ENCODE measurements at regions of chr12 and their contacts with region 1.

Region 1: DNA sequence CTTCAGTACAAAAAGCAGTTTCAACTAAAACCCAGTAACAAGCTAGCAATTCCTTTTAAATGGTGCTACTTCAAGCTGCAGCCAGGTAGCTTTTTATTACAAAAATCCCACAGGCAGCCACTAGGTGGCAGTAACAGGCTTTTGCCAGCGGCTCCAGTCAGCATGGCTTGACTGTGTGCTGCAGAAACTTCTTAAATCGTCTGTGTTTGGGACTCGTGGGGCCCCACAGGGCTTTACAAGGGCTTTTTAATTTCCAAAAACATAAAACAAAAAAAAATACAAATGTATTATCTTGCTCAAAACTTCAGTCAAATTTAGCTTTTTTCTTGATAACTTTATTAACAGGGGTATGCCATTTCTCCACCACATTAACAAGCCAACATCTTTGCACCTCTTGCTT is 3.6 kb upstream of the CLEC4E start:
- DNase-seq: peak; percentile 69 to 79 (median 72)
- H3K4me3 ChIP-seq: no peak overlapping the region
- H3K4me3 Mint-ChIP-seq: peak overlapping the region in 7 of 8 donors; percentile 37 to 59 (median 51)
- H3K27ac ChIP-seq: no peak overlapping the region
- H3K27ac Mint-ChIP-seq: no peak overlapping the region
- H3K4me1 ChIP-seq: peaks cover 6% of the 10 kb centered on the region
- H3K4me1 Mint-ChIP-seq: peaks cover 0 to 10% (median 5%) of the 10 kb centered on the region in 4 donors
- H3K27me3 ChIP-seq: no peaks in the 10 kb centered on the region
- H3K27me3 Mint-ChIP-seq: peaks cover 15 to 20% of the 10 kb centered on the region in 2 donors

Region 2: GRCh38 chr12:8420506-8420905 is 123.8 kb before region 1 on chr12:
- CTCF ChIA-PET with region 1: no interaction called
- POLR2A ChIA-PET with region 1: no interaction called
- intact Hi-C with region 1: no loop called
- DNase-seq: no peak
- H3K4me3 ChIP-seq: no peak overlapping the region
- H3K4me3 Mint-ChIP-seq: no peak overlapping the region
- H3K27ac ChIP-seq: no peak overlapping the region
- H3K27ac Mint-ChIP-seq: no peak overlapping the region
- H3K4me1 ChIP-seq: no peaks in the 10 kb centered on the region
- H3K4me1 Mint-ChIP-seq: no peaks in the 10 kb centered on the region
- H3K27me3 ChIP-seq: no peaks in the 10 kb centered on the region
- H3K27me3 Mint-ChIP-seq: no peaks in the 10 kb centered on the region

Region 3: DNA sequence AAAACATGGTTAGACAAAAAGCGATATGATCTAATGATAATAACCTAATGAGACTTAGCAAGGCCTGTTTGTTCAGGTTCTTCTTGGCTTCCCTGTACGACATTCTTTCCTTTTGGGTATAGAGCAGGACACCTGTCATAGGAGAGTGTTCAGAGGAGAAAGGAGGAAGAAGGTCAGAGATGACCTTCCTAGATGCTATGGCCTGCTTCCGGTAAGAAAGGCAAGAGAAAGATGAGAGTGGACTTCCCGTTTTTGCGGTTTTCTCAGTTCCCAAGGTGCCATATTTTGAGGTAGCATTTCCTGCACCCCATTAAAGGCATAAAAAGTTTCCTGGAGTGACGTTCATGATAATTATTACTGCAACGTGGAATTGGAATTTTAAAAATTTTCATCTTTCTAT is 12.2 kb before region 1 on chr12:
- CTCF ChIA-PET with region 1: interaction called, 25 read pairs
- POLR2A ChIA-PET with region 1: no interaction called
- intact Hi-C with region 1: no loop called
- DNase-seq: no peak
- H3K4me3 ChIP-seq: no peak overlapping the region
- H3K4me3 Mint-ChIP-seq: no peak overlapping the region
- H3K27ac ChIP-seq: no peak overlapping the region
- H3K27ac Mint-ChIP-seq: no peak overlapping the region
- H3K4me1 ChIP-seq: no peaks in the 10 kb centered on the region
- H3K4me1 Mint-ChIP-seq: no peaks in the 10 kb centered on the region
- H3K27me3 ChIP-seq: no peaks in the 10 kb centered on the region
- H3K27me3 Mint-ChIP-seq: peaks cover 11 to 17% of the 10 kb centered on the region in 2 donors

Region 4: GRCh38 chr12:8572507-8572906 is 28.2 kb after region 1 on chr12:
- CTCF ChIA-PET with region 1: interaction called, 24 read pairs
- POLR2A ChIA-PET with region 1: no interaction called
- intact Hi-C with region 1: no loop called
- DNase-seq: peak in 4 of 5 donors; percentile 27 to 53 (median 46)
- H3K4me3 ChIP-seq: no peak overlapping the region
- H3K4me3 Mint-ChIP-seq: peak overlapping the region in 7 of 8 donors; percentile 58 to 79 (median 72)
- H3K27ac ChIP-seq: no peak overlapping the region
- H3K27ac Mint-ChIP-seq: peak overlapping the region; percentile 35 to 95 (median 94)
- H3K4me1 ChIP-seq: peaks cover 21% of the 10 kb centered on the region
- H3K4me1 Mint-ChIP-seq: peaks cover 17 to 25% (median 18%) of the 10 kb centered on the region in 4 donors
- H3K27me3 ChIP-seq: no peaks in the 10 kb centered on the region
- H3K27me3 Mint-ChIP-seq: peaks cover 0 to 4% of the 10 kb centered on the region in 2 donors

Region 5: DNA sequence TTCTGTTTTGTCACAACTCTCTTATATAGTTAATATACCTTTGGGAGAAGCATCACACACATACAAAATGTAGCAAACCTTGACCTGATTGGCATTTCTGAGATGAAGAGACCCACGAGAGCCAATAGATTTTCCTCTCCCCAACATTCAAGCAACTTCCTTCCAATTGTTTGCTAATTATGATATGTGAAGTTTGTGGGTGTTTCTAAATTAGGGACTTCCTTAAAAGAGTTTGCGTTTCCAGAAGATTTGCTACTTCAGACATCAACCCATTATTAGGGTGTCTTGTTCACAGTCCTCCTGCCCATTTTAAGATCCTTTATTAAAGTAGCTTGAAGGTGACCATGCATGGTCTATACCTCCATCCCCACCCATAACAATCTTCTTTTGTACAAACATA is 59.0 kb after region 1 on chr12:
- CTCF ChIA-PET with region 1: interaction called, 130 read pairs
- POLR2A ChIA-PET with region 1: no interaction called
- intact Hi-C with region 1: no loop called
- DNase-seq: no peak
- H3K4me3 ChIP-seq: no peak overlapping the region
- H3K4me3 Mint-ChIP-seq: no peak overlapping the region
- H3K27ac ChIP-seq: no peak overlapping the region
- H3K27ac Mint-ChIP-seq: no peak overlapping the region
- H3K4me1 ChIP-seq: no peaks in the 10 kb centered on the region
- H3K4me1 Mint-ChIP-seq: peaks cover 0 to 2% (median 0%) of the 10 kb centered on the region in 4 donors
- H3K27me3 ChIP-seq: no peaks in the 10 kb centered on the region
- H3K27me3 Mint-ChIP-seq: peaks cover 4 to 7% of the 10 kb centered on the region in 2 donors

Region 6: DNA sequence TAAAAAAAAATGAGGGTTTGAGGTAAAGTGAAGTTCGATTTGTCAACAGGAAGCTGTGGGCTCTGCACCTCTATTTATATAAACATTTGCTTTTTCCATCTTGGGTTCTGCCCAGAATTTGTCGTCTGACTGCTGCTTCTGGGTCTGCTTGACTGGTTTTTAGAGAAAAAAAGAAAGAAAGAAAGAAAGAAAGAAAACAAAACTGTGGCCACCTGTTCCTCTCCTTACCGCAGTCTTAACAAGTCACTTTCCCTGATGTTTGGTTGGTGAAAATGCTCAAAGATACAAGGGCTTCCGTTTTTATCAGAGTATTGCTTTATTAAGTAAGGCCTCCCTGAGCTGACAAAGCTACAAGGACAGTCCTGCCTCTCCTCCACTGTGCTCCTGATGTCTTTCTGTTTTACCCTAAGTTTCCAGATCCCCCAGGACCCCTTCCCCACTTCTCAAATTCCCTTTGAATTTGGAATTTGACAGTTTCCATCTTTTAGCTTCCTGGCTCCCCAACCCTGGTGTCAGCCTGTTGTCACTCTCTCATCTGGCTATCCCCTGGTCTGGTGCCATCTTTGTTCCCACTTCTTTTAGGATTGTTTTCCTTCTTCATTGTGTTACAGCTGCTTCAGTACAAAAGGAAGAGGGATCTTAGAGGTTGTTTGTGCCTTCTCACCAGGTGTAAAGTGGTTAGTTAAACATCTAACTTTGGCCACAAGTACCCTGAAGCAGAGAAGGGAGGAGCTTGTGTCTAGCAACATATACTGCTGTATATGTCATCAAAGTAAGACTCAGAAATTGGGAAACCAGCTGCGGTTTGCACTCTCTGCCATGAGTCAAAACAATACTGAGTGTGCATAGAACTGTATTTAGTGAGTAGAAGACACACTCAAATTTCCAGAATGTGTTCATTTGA is 100.3 kb after region 1 on chr12:
- CTCF ChIA-PET with region 1: interaction called, 12 read pairs
- POLR2A ChIA-PET with region 1: interaction called, 6 read pairs
- intact Hi-C with region 1: no loop called
- DNase-seq: peak; percentile 52 to 65 (median 59)
- H3K4me3 ChIP-seq: peak overlapping the region in 1 of 2 donors; percentile 36
- H3K4me3 Mint-ChIP-seq: peak overlapping the region; percentile 68 to 92 (median 82)
- H3K27ac ChIP-seq: peak overlapping the region; percentile 38
- H3K27ac Mint-ChIP-seq: peak overlapping the region; percentile 83 to 98 (median 94)
- H3K4me1 ChIP-seq: peaks cover 42% of the 10 kb centered on the region
- H3K4me1 Mint-ChIP-seq: peaks cover 37 to 60% (median 46%) of the 10 kb centered on the region in 4 donors
- H3K27me3 ChIP-seq: no peaks in the 10 kb centered on the region
- H3K27me3 Mint-ChIP-seq: no peaks in the 10 kb centered on the region

Region 7: GRCh38 chr12:8681041-8681902 is 137.0 kb after region 1 on chr12:
- CTCF ChIA-PET with region 1: interaction called, 59 read pairs
- POLR2A ChIA-PET with region 1: no interaction called
- intact Hi-C with region 1: loop called (anchors 1 kb)
- DNase-seq: no peak
- H3K4me3 ChIP-seq: no peak overlapping the region
- H3K4me3 Mint-ChIP-seq: no peak overlapping the region
- H3K27ac ChIP-seq: no peak overlapping the region
- H3K27ac Mint-ChIP-seq: peak overlapping the region in 1 of 7 donors; percentile 30
- H3K4me1 ChIP-seq: no peaks in the 10 kb centered on the region
- H3K4me1 Mint-ChIP-seq: peaks cover 0 to 9% (median 5%) of the 10 kb centered on the region in 4 donors
- H3K27me3 ChIP-seq: no peaks in the 10 kb centered on the region
- H3K27me3 Mint-ChIP-seq: peaks cover 5 to 10% of the 10 kb centered on the region in 2 donors

Region 8: GRCh38 chr12:8860165-8860961 is 316.1 kb after region 1 on chr12:
- CTCF ChIA-PET with region 1: interaction called, 24 read pairs
- POLR2A ChIA-PET with region 1: interaction called, 4 read pairs
- intact Hi-C with region 1: loop called (anchors 1 kb)
- DNase-seq: peak in 4 of 5 donors; percentile 18 to 28 (median 25)
- H3K4me3 ChIP-seq: no peak overlapping the region
- H3K4me3 Mint-ChIP-seq: no peak overlapping the region
- H3K27ac ChIP-seq: no peak overlapping the region
- H3K27ac Mint-ChIP-seq: no peak overlapping the region
- H3K4me1 ChIP-seq: no peaks in the 10 kb centered on the region
- H3K4me1 Mint-ChIP-seq: no peaks in the 10 kb centered on the region
- H3K27me3 ChIP-seq: no peaks in the 10 kb centered on the region
- H3K27me3 Mint-ChIP-seq: peaks cover 0 to 4% of the 10 kb centered on the region in 2 donors

Region 9: DNA sequence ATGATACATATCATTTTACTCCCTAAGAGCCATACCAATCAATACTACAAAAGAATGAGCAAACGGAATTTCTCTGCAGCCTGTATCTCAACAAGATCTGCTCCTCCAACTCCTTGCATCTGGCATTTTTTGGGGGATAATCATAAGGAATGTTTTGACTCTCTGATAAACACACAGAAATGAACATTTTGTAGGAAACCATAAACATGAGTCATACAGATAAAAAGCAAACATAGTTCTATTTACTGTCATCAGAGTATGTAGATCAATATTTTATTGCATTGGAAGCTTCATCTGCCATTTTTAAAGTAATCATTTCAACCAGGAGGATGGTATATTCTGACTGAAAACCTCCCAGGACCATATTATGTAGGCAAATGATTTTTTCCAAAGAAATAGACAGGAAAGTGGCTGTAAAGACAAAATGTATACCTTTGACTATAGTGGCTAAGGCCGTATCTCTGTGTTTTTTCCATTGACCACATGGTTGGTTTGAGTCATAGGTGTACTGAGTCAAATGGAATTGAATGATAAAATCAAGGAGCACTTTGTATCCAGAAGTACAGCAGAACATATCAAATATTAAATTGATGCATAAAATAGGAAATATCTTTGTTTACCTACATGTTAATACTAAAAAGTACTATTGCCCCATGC is 1248.8 kb after region 1 on chr12:
- CTCF ChIA-PET with region 1: no interaction called
- POLR2A ChIA-PET with region 1: no interaction called
- intact Hi-C with region 1: no loop called
- DNase-seq: no peak
- H3K4me3 ChIP-seq: no peak overlapping the region
- H3K4me3 Mint-ChIP-seq: peak overlapping the region in 5 of 8 donors; percentile 9 to 84 (median 58)
- H3K27ac ChIP-seq: no peak overlapping the region
- H3K27ac Mint-ChIP-seq: peak overlapping the region in 1 of 7 donors; percentile 86
- H3K4me1 ChIP-seq: peaks cover 57% of the 10 kb centered on the region
- H3K4me1 Mint-ChIP-seq: peaks cover 34 to 52% (median 47%) of the 10 kb centered on the region in 4 donors
- H3K27me3 ChIP-seq: no peaks in the 10 kb centered on the region
- H3K27me3 Mint-ChIP-seq: peaks cover 0 to 2% of the 10 kb centered on the region in 2 donors

Measured in CD4-positive, alpha-beta memory T cell (primary cell).